Gastrocnemius medialis (tissue), 4 donors: ENCODE measurements at regions of chr2 and their contacts with region 1.

Region 1: DNA sequence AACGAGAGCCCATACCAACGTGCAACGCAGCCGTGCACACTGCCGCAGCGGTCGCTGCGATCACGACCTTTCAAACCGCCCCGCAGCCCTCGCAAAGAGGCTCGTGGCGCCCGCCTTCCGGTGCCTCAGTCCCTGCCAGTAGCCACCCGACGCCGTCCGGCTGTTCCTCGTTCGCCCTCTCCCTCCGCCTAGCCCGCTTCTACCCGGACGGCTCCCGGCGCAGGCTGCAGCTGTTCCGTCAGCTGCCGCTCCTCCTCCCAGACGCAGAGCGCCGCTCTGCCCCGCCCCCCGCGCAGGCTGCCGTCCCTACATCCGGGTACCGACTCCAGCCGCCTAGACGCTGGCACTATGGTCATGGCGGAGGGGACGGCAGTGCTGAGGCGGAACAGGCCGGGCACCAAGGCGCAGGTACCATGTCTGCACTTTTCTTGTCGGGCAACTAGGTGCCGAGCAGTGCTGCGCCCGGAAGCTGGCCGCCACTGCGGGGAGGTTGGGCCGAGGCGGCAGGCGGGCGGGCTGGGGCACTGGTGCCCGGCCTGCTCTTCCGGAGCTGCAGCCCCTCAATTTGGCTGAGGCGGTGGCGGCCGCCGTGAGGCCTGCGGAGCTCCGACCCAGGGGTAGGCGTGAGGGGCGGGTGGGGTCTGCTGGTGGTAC is at the start of gene MOB4:
- DNase-seq: peak; percentile 95
- ATAC-seq: peak; percentile 93 to 95
- H3K4me3 ChIP-seq: peak within 1 kb of the TSS; percentile 70 to 100 (median 86)
- H3K27ac ChIP-seq: peak within 1 kb of the TSS; percentile 93 to 100 (median 95)
- H3K4me1 ChIP-seq: peaks cover 19 to 26% of the 10 kb centered on the region in 2 donors
- H3K27me3 ChIP-seq: no peaks in the 10 kb centered on the region
- CTCF ChIP-seq: no peak
- POLR2A ChIP-seq: peak; percentile 95 to 97
- total RNA-seq, gene MOB4: 29.3 to 41.3 (median 38.2) TPM

Region 2: GRCh38 chr2:197159661-197160211 is 356.1 kb before region 1 on chr2:
- in situ Hi-C with region 1: no loop called
- intact Hi-C with region 1: no loop called
- DNase-seq: no peak
- ATAC-seq: no peak
- H3K4me3 ChIP-seq: no peak overlapping the region
- H3K27ac ChIP-seq: no peak overlapping the region
- H3K4me1 ChIP-seq: no peaks in the 10 kb centered on the region
- H3K27me3 ChIP-seq: no peaks in the 10 kb centered on the region
- CTCF ChIP-seq: no peak
- POLR2A ChIP-seq: no peak

Region 3: GRCh38 chr2:197327472-197328098 is 188.3 kb before region 1 on chr2:
- in situ Hi-C with region 1: no loop called
- intact Hi-C with region 1: no loop called
- DNase-seq: no peak
- ATAC-seq: no peak
- H3K4me3 ChIP-seq: no peak overlapping the region
- H3K27ac ChIP-seq: no peak overlapping the region
- H3K4me1 ChIP-seq: no peaks in the 10 kb centered on the region
- H3K27me3 ChIP-seq: no peaks in the 10 kb centered on the region
- CTCF ChIP-seq: no peak
- POLR2A ChIP-seq: no peak

Region 4: GRCh38 chr2:197499594-197500526 is 16.0 kb before region 1 on chr2 and contains the starts of genes HSPD1 and HSPE1:
- in situ Hi-C with region 1: no loop called
- intact Hi-C with region 1: loop called (anchors 1 kb)
- DNase-seq: peak; percentile 96
- ATAC-seq: peak; percentile 86 to 91
- H3K4me3 ChIP-seq: peak within 1 kb of the TSS; percentile 81 to 89 (median 84)
- H3K27ac ChIP-seq: peak within 1 kb of the TSS; percentile 96 to 98 (median 97)
- H3K4me1 ChIP-seq: peaks cover 38 to 45% of the 10 kb centered on the region in 2 donors
- H3K27me3 ChIP-seq: no peaks in the 10 kb centered on the region
- CTCF ChIP-seq: peak in 3 of 5 experiments; percentile 25 to 44 (median 26)
- POLR2A ChIP-seq: peak; percentile 95
- total RNA-seq, gene HSPD1: 82.0 to 104 (median 88.2) TPM
- total RNA-seq, gene HSPE1: 43.2 to 122 (median 88.0) TPM

Region 5: GRCh38 chr2:197675711-197676188 is 159.9 kb after region 1 on chr2:
- in situ Hi-C with region 1: no loop called
- intact Hi-C with region 1: no loop called
- DNase-seq: no peak
- ATAC-seq: peak in 1 of 2 donors; percentile 45
- H3K4me3 ChIP-seq: peak overlapping the region; percentile 44 to 55 (median 47)
- H3K27ac ChIP-seq: peak overlapping the region; percentile 45 to 71 (median 63)
- H3K4me1 ChIP-seq: peaks cover 0 to 4% of the 10 kb centered on the region in 2 donors
- H3K27me3 ChIP-seq: no peaks in the 10 kb centered on the region
- CTCF ChIP-seq: no peak
- POLR2A ChIP-seq: peak in 1 of 2 donors; percentile 38